HepG2 (cell line): ENCODE measurements at regions of chr6 and their contacts with region 1.

Region 1: GRCh38 chr6:158853072-158853871 is 34.1 kb upstream of the EZR start:
- DNase-seq: peak; percentile 89
- ATAC-seq: peak; percentile 88
- H3K4me3 ChIP-seq: peak overlapping the region in 2 of 3 experiments; percentile 13 to 43; a peak in 5 of 6 replicates
- H3K27ac ChIP-seq: no peak overlapping the region
- H3K4me1 ChIP-seq: peaks cover 44% of the 10 kb centered on the region
- H3K27me3 ChIP-seq: peaks cover 2 to 31% of the 10 kb centered on the region in 2 experiments; a peak in 3 of 5 replicates
- CTCF ChIP-seq: peak; percentile 7; the same call in 1 of the 2 replicates
- EP300 ChIP-seq: peak in 1 of 2 experiments; percentile 70; a peak in 1 of 4 replicates
- POLR2A ChIP-seq: no peak
- RAD21 ChIP-seq: no peak

Region 2: GRCh38 chr6:158819213-158819909 is 33.9 kb before region 1 on chr6 and contains the start of gene EZR:
- CTCF ChIA-PET with region 1: no interaction called
- POLR2A ChIA-PET with region 1: interaction called, 6 read pairs
- in situ Hi-C with region 1: no loop called
- intact Hi-C with region 1: loop called (anchors 5 kb)
- DNase-seq: peak; percentile 59
- ATAC-seq: peak; percentile 56
- H3K4me3 ChIP-seq: peak within 1 kb of the TSS; percentile 70 to 87 (median 81)
- H3K27ac ChIP-seq: peak within 1 kb of the TSS; percentile 50
- H3K4me1 ChIP-seq: peaks cover 47% of the 10 kb centered on the region
- H3K27me3 ChIP-seq: no peaks in the 10 kb centered on the region; a peak in 1 of 5 replicates
- CTCF ChIP-seq: peak; percentile 45
- EP300 ChIP-seq: no peak
- POLR2A ChIP-seq: peak; percentile 64 to 83
- RAD21 ChIP-seq: peak; percentile 16; the same call in 1 of the 2 replicates
- total RNA-seq, gene EZR: 60.3 and 75.7 TPM in 2 replicates

Region 3: GRCh38 chr6:158831197-158831970 is 21.9 kb before region 1 on chr6:
- CTCF ChIA-PET with region 1: no interaction called
- POLR2A ChIA-PET with region 1: no interaction called
- in situ Hi-C with region 1: no loop called
- intact Hi-C with region 1: no loop called
- DNase-seq: no peak
- ATAC-seq: no peak
- H3K4me3 ChIP-seq: no peak overlapping the region
- H3K27ac ChIP-seq: no peak overlapping the region
- H3K4me1 ChIP-seq: peaks cover 26% of the 10 kb centered on the region
- H3K27me3 ChIP-seq: peaks cover under 1 to 2% of the 10 kb centered on the region in 2 experiments; a peak in 2 of 5 replicates
- CTCF ChIP-seq: no peak
- EP300 ChIP-seq: no peak
- POLR2A ChIP-seq: no peak
- RAD21 ChIP-seq: no peak

Region 4: DNA sequence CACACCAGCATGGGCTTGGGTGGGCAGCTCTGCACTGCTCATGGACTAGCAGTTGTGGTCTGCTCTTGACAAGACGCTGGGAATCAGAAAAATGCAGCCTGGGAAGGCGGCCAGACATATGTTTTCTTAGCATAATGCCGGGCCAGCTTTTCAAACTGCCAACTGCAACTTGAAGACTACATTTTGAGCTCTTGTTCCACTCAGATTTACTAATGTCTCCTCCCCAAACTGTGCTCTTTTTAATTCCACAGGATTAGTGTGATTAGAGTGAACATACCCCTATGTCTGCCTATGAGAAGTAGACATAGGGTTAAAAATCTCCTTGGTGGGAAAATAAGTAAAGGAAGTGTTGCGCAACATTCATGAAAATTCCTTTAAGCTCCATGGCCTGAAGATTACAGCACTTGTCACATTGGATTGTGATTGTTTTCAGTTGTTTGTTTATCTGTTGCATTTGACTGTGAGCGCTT is 310.7 kb after region 1 on chr6:
- CTCF ChIA-PET with region 1: no interaction called
- POLR2A ChIA-PET with region 1: no interaction called
- in situ Hi-C with region 1: no loop called
- intact Hi-C with region 1: no loop called
- DNase-seq: no peak
- ATAC-seq: no peak
- H3K4me3 ChIP-seq: no peak overlapping the region
- H3K27ac ChIP-seq: no peak overlapping the region
- H3K4me1 ChIP-seq: no peaks in the 10 kb centered on the region
- H3K27me3 ChIP-seq: peaks cover 1 to 32% of the 10 kb centered on the region in 2 experiments; a peak in 4 of 5 replicates
- CTCF ChIP-seq: no peak
- EP300 ChIP-seq: no peak
- POLR2A ChIP-seq: no peak
- RAD21 ChIP-seq: no peak

Region 5: GRCh38 chr6:160445130-160445529 is 1591.9 kb after region 1 on chr6:
- CTCF ChIA-PET with region 1: no interaction called
- POLR2A ChIA-PET with region 1: no interaction called
- in situ Hi-C with region 1: no loop called
- intact Hi-C with region 1: loop called (anchors 5 kb)
- DNase-seq: no peak
- ATAC-seq: no peak
- H3K4me3 ChIP-seq: no peak overlapping the region
- H3K27ac ChIP-seq: no peak overlapping the region
- H3K4me1 ChIP-seq: peaks cover 11% of the 10 kb centered on the region; the same call in 1 of the 2 replicates
- H3K27me3 ChIP-seq: no peaks in the 10 kb centered on the region
- CTCF ChIP-seq: no peak
- EP300 ChIP-seq: no peak
- POLR2A ChIP-seq: no peak
- RAD21 ChIP-seq: no peak